ENCODE measurements at regions of chr4 and their contacts with region 1.

Region 1: GRCh38 chr4:48085821-48086607 is 48.0 kb downstream of the TXK start:
- DNase-seq: no peak
- H3K4me3 ChIP-seq: no peak overlapping the region
- H3K4me3 Mint-ChIP-seq: no peak overlapping the region
- H3K27ac Mint-ChIP-seq: no peak overlapping the region
- H3K4me1 ChIP-seq: peaks cover 35% of the 10 kb centered on the region
- H3K4me1 Mint-ChIP-seq: peaks cover 9% of the 10 kb centered on the region
- H3K27me3 ChIP-seq: no peaks in the 10 kb centered on the region
- H3K27me3 Mint-ChIP-seq: no peaks in the 10 kb centered on the region
- CTCF ChIP-seq: no peak

Region 2: GRCh38 chr4:47704693-47705325 is 381.2 kb before region 1 on chr4:
- CTCF ChIA-PET with region 1: no interaction called
- POLR2A ChIA-PET with region 1: no interaction called
- intact Hi-C with region 1: loop called (anchors 1 kb)
- DNase-seq: peak; percentile 63 to 67
- H3K4me3 ChIP-seq: no peak overlapping the region
- H3K4me3 Mint-ChIP-seq: no peak overlapping the region
- H3K27ac Mint-ChIP-seq: no peak overlapping the region
- H3K4me1 ChIP-seq: no peaks in the 10 kb centered on the region
- H3K4me1 Mint-ChIP-seq: no peaks in the 10 kb centered on the region
- H3K27me3 ChIP-seq: no peaks in the 10 kb centered on the region
- H3K27me3 Mint-ChIP-seq: no peaks in the 10 kb centered on the region
- CTCF ChIP-seq: peak; percentile 49 to 73

Region 3: DNA sequence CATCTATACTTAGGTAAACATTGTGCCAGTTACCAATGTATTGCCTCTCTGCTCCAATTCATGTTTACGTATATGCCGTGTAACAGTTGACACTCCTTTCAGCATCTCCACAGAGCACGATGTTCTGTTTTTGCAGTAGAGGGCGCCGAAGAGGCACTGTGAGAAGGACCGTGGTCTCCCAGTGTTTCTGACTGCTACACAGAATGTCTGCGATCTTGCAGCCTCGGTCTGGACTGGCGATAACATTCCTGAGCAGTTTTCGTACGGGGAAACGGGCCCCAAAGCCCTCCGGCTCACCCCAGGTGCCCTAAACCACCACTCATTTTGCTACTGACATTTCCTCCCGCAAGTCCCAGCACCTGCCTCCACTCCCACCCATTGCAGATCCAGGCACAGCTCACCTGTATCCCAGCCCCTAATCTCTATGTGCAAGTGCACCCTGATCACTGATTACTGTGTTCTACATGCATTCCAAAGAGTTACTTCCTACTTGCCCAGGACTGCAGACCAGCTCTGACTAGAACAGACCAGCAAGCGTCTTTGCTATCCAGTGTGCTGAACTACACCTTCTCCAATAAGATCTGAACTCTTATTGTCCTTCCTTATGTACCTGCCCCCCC is 159.3 kb before region 1 on chr4:
- CTCF ChIA-PET with region 1: interaction called, 3 read pairs
- POLR2A ChIA-PET with region 1: no interaction called
- intact Hi-C with region 1: loop called (anchors 1 kb)
- DNase-seq: peak; percentile 81 to 85
- H3K4me3 ChIP-seq: peak overlapping the region; percentile 44
- H3K4me3 Mint-ChIP-seq: peak overlapping the region; percentile 90
- H3K27ac Mint-ChIP-seq: peak overlapping the region; percentile 83
- H3K4me1 ChIP-seq: peaks cover 10% of the 10 kb centered on the region
- H3K4me1 Mint-ChIP-seq: no peaks in the 10 kb centered on the region
- H3K27me3 ChIP-seq: no peaks in the 10 kb centered on the region
- H3K27me3 Mint-ChIP-seq: no peaks in the 10 kb centered on the region
- CTCF ChIP-seq: peak; percentile 72 to 80

Region 4: GRCh38 chr4:48008021-48008596 is 77.9 kb before region 1 on chr4:
- CTCF ChIA-PET with region 1: interaction called, 4 read pairs
- POLR2A ChIA-PET with region 1: no interaction called
- intact Hi-C with region 1: loop called (anchors 1 kb)
- DNase-seq: peak in 1 of 2 experiments; percentile 36
- H3K4me3 ChIP-seq: no peak overlapping the region
- H3K4me3 Mint-ChIP-seq: no peak overlapping the region
- H3K27ac Mint-ChIP-seq: no peak overlapping the region
- H3K4me1 ChIP-seq: no peaks in the 10 kb centered on the region
- H3K4me1 Mint-ChIP-seq: no peaks in the 10 kb centered on the region
- H3K27me3 ChIP-seq: no peaks in the 10 kb centered on the region
- H3K27me3 Mint-ChIP-seq: no peaks in the 10 kb centered on the region
- CTCF ChIP-seq: no peak

Region 5: GRCh38 chr4:48033825-48034413 is 52.1 kb before region 1 on chr4:
- CTCF ChIA-PET with region 1: interaction called, 4 read pairs
- POLR2A ChIA-PET with region 1: no interaction called
- intact Hi-C with region 1: loop called (anchors 2 kb)
- DNase-seq: peak in 1 of 2 experiments; percentile 57
- H3K4me3 ChIP-seq: no peak overlapping the region
- H3K4me3 Mint-ChIP-seq: peak overlapping the region; percentile 8
- H3K27ac Mint-ChIP-seq: peak overlapping the region; percentile 23
- H3K4me1 ChIP-seq: peaks cover 29% of the 10 kb centered on the region
- H3K4me1 Mint-ChIP-seq: peaks cover 21% of the 10 kb centered on the region
- H3K27me3 ChIP-seq: no peaks in the 10 kb centered on the region
- H3K27me3 Mint-ChIP-seq: no peaks in the 10 kb centered on the region
- CTCF ChIP-seq: peak; percentile 38 to 53

Measured in Caco-2 (cell line).